Heart left ventricle (tissue), 16 donors: ENCODE measurements at regions of chr19 and their contacts with region 1.

Region 1: GRCh38 chr19:7197760-7198696 is 96.2 kb downstream of the INSR start:
- DNase-seq: peak; percentile 93 to 96 (median 94)
- ATAC-seq: peak; percentile 86 to 94 (median 92)
- H3K4me3 ChIP-seq: peak overlapping the region; percentile 43 to 83 (median 75)
- H3K27ac ChIP-seq: peak overlapping the region; percentile 73 to 90 (median 86)
- H3K4me1 ChIP-seq: peaks cover 0 to 36% (median 18%) of the 10 kb centered on the region in 12 donors
- H3K27me3 ChIP-seq: no peaks in the 10 kb centered on the region
- CTCF ChIP-seq: peak in 4 of 12 donors; percentile 11 to 33 (median 26)
- POLR2A ChIP-seq: peak; percentile 72 to 77

Region 2: GRCh38 chr19:6847828-6848200 is 350.2 kb before region 1 on chr19:
- intact Hi-C with region 1: no loop called
- DNase-seq: no peak
- ATAC-seq: no peak
- H3K4me3 ChIP-seq: no peak overlapping the region
- H3K27ac ChIP-seq: no peak overlapping the region
- H3K4me1 ChIP-seq: peaks cover 0 to 8% (median 0%) of the 10 kb centered on the region in 12 donors
- H3K27me3 ChIP-seq: peaks cover 0 to 6% (median 0%) of the 10 kb centered on the region in 9 donors
- CTCF ChIP-seq: no peak
- POLR2A ChIP-seq: no peak

Region 3: DNA sequence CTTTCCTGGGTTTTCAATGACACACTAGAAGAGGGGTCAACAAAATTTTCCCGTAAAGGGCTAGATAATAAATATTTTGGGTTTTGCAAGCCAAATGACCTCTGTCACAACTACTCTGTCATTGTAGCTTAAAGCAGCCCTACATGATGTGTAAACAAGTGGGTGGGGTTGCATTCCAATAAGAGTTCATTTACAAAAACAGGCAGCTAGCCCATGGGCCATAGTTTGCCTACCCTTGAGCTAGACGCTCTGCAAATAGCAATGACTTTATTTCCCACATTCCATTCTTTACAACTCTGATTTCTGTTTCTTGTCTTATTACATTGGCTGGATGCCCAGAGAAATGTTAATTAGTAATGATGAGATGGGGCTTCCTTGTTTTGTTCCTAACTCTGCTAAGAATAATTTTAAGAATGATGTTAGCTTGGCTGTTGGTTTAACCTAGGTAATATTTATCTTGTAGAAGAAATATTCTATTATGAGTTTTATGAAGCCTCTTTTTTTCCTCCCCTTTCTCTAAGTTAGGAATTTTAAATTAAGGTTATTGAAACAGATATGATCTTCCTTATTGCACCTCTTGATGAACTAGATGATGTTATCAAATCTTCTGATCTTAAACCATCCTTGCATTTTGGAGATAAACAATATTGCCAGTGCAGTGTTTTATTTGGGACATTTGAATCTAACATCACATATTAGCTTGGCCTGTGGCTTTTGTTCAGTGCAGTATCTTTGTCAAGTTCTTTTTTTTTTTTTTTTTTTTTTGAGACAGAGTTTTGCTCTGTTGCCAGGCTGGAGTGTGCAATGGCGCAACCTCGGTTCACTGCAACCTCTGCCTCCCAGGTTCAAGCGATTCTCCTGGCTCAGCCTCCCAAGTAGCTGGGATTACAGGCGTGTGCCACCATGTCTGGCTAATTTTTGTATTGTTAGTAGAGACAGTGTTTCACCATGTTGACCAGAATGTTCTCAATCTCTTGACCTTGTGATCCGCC is 52.2 kb before region 1 on chr19:
- intact Hi-C with region 1: loop called in 1 of 10 experiments (anchors 5 kb)
- DNase-seq: no peak
- ATAC-seq: peak in 1 of 4 donors; percentile 23
- H3K4me3 ChIP-seq: no peak overlapping the region
- H3K27ac ChIP-seq: peak overlapping the region in 2 of 12 donors; percentile 2 to 30
- H3K4me1 ChIP-seq: peaks cover 0 to 4% (median 0%) of the 10 kb centered on the region in 12 donors
- H3K27me3 ChIP-seq: no peaks in the 10 kb centered on the region
- CTCF ChIP-seq: no peak
- POLR2A ChIP-seq: no peak

Region 4: DNA sequence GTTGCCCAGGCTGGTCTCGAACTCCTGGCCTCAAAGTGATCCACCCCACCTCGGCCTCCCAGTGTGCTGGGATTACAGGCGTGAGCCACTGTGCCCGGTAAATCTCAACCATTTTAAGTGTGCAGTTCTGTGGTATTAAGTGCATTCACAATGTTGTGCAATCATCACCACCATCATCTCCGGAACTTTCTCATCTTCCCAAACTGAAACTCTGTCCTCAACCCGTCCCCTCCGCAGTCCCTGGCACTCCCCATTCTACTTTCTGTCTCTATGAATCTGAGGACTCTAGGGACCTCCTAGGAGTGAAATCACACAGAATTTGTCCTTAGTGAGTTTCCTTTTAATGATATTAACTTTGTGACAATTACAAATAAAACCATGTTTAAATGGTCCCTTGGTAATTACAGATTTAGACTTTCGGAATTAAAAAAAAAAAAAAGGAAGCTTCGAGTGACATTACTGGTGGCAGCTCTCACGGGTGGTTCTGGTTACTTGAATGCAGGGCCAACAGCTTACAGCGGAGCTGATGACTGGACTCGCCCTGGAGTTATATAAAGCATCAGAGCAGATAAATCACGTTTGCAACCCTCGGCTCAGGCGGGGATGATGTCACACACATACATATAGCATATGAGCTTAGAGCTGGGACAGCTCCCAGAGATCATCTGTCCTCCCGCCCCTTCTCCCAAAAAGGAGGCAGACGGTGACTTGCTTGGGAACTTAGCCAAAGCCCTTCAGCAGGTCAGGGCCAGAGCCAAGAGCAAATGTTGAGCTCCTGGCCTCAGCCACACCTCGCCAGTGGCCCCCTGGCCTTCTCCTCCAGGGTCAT is 38.7 kb before region 1 on chr19:
- intact Hi-C with region 1: loop called in 2 of 10 experiments (anchors 2 to 5 kb)
- DNase-seq: peak; percentile 77 to 92 (median 87)
- ATAC-seq: peak; percentile 96 to 98 (median 96)
- H3K4me3 ChIP-seq: peak overlapping the region in 4 of 12 donors; percentile 2 to 34 (median 7)
- H3K27ac ChIP-seq: peak overlapping the region; percentile 59 to 96 (median 88)
- H3K4me1 ChIP-seq: peaks cover 0 to 32% (median 9%) of the 10 kb centered on the region in 12 donors
- H3K27me3 ChIP-seq: no peaks in the 10 kb centered on the region
- CTCF ChIP-seq: no peak
- POLR2A ChIP-seq: peak in 1 of 2 donors; percentile 20

Region 5: DNA sequence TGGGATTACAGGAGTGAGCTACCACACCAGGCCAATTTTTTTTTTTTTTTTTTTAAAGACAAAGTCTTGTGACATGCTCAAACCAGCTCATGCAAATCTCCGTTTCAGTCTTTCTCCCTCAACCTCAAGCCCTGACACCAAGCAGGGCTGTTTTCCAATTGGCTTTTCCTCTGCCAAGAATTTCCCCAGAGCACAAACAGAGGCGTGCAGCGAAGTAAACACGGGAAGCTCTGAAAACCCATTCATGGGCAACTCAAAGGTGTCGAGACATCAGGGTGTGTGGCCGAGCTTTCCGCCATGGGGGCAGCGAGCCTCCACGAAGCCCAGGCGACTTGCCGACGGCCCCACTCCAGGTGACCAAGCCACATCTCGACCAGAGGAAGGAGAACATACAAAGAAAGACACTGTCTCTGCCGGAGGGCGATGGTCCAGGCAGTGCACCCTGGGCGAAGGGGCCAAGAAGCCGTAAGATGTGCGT is 26.2 kb after region 1 on chr19:
- intact Hi-C with region 1: no loop called
- DNase-seq: peak in 2 of 5 donors; percentile 20 to 53
- ATAC-seq: peak; percentile 41 to 68 (median 52)
- H3K4me3 ChIP-seq: peak overlapping the region in 2 of 12 donors; percentile 12 to 28
- H3K27ac ChIP-seq: peak overlapping the region in 8 of 12 donors; percentile 12 to 76 (median 51)
- H3K4me1 ChIP-seq: peaks cover 0 to 48% (median 33%) of the 10 kb centered on the region in 12 donors
- H3K27me3 ChIP-seq: no peaks in the 10 kb centered on the region
- CTCF ChIP-seq: no peak
- POLR2A ChIP-seq: no peak

Region 6: DNA sequence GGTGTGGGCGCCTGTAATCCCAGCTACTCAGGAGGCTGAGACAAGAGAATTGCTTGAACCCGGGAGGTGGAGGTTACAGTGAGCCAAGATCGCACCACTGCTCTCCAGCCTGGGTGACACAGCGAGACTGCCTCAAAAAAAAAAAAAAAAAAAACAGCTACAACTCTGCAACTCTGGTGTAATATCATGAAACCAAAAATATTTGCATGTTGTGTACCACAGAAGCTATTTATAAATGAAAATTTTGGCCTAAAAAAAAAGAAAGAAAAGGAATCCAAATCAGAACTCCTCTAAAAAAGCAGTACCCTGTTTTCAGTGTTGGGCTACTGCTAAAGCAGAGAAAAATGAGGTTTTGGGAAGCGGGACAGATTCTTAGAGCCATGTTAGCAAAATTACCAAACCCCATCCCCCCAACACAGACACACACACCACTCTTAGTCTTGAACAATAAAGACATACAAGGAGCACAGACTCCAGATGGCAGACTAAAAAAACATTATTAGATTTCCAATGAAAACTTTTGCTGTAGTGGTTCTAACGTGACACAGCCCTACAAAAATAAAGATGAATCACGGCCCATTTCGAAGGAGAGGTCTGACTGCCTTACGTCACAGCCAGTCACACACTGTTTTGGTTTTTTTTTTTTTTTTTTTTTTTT is 44.7 kb after region 1 on chr19:
- intact Hi-C with region 1: loop called in 1 of 10 experiments (anchors 5 kb)
- DNase-seq: no peak
- ATAC-seq: peak; percentile 50 to 82 (median 76)
- H3K4me3 ChIP-seq: peak overlapping the region in 2 of 12 donors; percentile 3 to 15
- H3K27ac ChIP-seq: peak overlapping the region in 10 of 12 donors; percentile 21 to 77 (median 60)
- H3K4me1 ChIP-seq: peaks cover 3 to 46% (median 18%) of the 10 kb centered on the region in 12 donors
- H3K27me3 ChIP-seq: no peaks in the 10 kb centered on the region
- CTCF ChIP-seq: no peak
- POLR2A ChIP-seq: no peak